Tibial artery (tissue), 4 donors: ENCODE measurements at regions of chr12 and their contacts with region 1.

Region 1: DNA sequence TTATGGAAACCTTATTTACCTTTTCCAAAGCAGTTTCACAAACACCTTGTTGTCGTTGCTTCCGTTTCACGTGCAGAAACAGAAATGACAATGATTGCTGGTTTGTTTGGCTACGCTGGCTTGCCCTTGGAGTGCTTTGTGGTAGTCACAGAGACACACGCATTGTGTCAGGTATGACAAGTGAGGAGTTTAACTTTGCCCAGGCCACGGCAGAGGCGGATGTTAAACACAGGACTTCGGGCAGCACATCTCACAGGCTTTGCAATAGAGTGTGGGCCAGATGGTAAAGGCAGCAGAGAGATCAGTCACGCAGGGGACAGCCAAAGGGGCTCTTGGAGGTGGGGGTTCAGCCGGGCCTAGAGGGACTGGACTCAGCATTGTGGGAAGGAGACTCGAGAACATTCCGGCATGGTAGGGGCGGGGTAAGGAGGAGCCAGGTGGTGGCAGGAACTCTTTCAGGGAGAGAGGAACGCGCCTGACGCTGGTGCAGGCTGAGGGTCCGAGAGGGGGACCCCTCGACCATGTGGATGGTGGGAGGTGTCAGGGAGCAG is 59.8 kb upstream of the KCNA1 start:
- DNase-seq: no peak
- H3K4me3 ChIP-seq: no peak overlapping the region
- H3K27ac ChIP-seq: no peak overlapping the region
- H3K4me1 ChIP-seq: no peaks in the 10 kb centered on the region
- H3K27me3 ChIP-seq: peaks cover 0 to 3% of the 10 kb centered on the region in 2 donors
- CTCF ChIP-seq: no peak

Region 2: DNA sequence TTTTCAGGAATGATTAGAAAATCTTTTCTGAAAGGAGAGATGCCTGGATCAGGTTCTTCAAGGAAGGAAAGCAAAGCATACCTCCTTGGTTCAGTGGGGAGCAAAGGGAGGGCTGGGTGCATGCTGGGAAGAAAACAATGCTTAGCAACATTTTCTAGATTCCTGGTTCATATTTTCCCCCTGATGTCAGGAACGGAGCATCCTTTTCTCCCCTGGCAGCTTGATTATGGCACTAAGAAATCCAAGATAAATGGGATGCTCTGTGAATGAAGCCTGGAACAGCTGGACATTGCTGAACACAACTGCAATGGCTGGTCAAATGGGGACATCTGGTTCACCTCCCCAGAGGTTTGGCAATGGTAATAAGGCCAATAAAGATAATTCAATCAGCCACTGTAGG is 244.7 kb after region 1 on chr12:
- intact Hi-C with region 1: loop called (anchors 5 kb)
- DNase-seq: no peak
- H3K4me3 ChIP-seq: no peak overlapping the region
- H3K27ac ChIP-seq: no peak overlapping the region
- H3K4me1 ChIP-seq: peaks cover 0 to 6% (median 0%) of the 10 kb centered on the region in 4 donors
- H3K27me3 ChIP-seq: peaks cover 0 to 2% of the 10 kb centered on the region in 2 donors
- CTCF ChIP-seq: no peak